ENCODE measurements at regions of chr1 and their contacts with region 1.

Region 1: GRCh38 chr1:33908324-33908956 is 44.6 kb downstream of the HMGB4 start:
- DNase-seq: no peak
- H3K4me3 ChIP-seq: no peak overlapping the region
- H3K27ac ChIP-seq: no peak overlapping the region
- H3K4me1 ChIP-seq: no peaks in the 10 kb centered on the region
- H3K27me3 ChIP-seq: no peaks in the 10 kb centered on the region
- CTCF ChIP-seq: no peak

Region 2: GRCh38 chr1:33944027-33944426 is 35.6 kb after region 1 on chr1:
- CTCF ChIA-PET with region 1: no interaction called
- dilution Hi-C with region 1: loop called (anchors 5 kb)
- in situ Hi-C with region 1: no loop called
- intact Hi-C with region 1: no loop called
- DNase-seq: no peak
- H3K4me3 ChIP-seq: no peak overlapping the region
- H3K27ac ChIP-seq: no peak overlapping the region
- H3K4me1 ChIP-seq: no peaks in the 10 kb centered on the region
- H3K27me3 ChIP-seq: no peaks in the 10 kb centered on the region
- CTCF ChIP-seq: no peak